ENCODE measurements at regions of chr14 and their contacts with region 1.

Region 1: GRCh38 chr14:88168498-88169165 is 154.4 kb downstream of the KCNK10 start:
- DNase-seq: peak; percentile 51
- H3K4me3 ChIP-seq: no peak overlapping the region
- H3K27ac ChIP-seq: no peak overlapping the region
- H3K4me1 ChIP-seq: peaks cover 0 to 4% (median 0%) of the 10 kb centered on the region in 4 donors
- H3K27me3 ChIP-seq: no peaks in the 10 kb centered on the region
- CTCF ChIP-seq: peak; percentile 54 to 75 (median 66)
- EP300 ChIP-seq: no peak
- POLR2A ChIP-seq: no peak

Region 2: GRCh38 chr14:87944987-87945604 is 223.5 kb before region 1 on chr14:
- in situ Hi-C with region 1: loop called in 3 of 4 experiments (anchors 10 to 25 kb)
- intact Hi-C with region 1: no loop called
- DNase-seq: no peak
- H3K4me3 ChIP-seq: no peak overlapping the region
- H3K27ac ChIP-seq: no peak overlapping the region
- H3K4me1 ChIP-seq: no peaks in the 10 kb centered on the region
- H3K27me3 ChIP-seq: no peaks in the 10 kb centered on the region
- CTCF ChIP-seq: peak; percentile 62 to 68 (median 67)
- EP300 ChIP-seq: no peak
- POLR2A ChIP-seq: no peak